ENCODE measurements at regions of chr15 and their contacts with region 1.

Region 1: GRCh38 chr15:95375281-95375680 is 955.2 kb upstream of the NR2F2 start:
- DNase-seq: no peak
- ATAC-seq: no peak
- H3K4me3 ChIP-seq: no peak overlapping the region
- H3K27ac ChIP-seq: no peak overlapping the region
- H3K4me1 ChIP-seq: no peaks in the 10 kb centered on the region
- H3K27me3 ChIP-seq: no peaks in the 10 kb centered on the region
- CTCF ChIP-seq: no peak
- POLR2A ChIP-seq: no peak

Region 2: GRCh38 chr15:95323804-95324203 is 51.5 kb before region 1 on chr15:
- intact Hi-C with region 1: no loop called
- DNase-seq: peak in 1 of 5 donors; percentile 26
- ATAC-seq: no peak
- H3K4me3 ChIP-seq: peak overlapping the region in 2 of 12 donors; percentile 66 to 69
- H3K27ac ChIP-seq: peak overlapping the region in 9 of 12 donors; percentile 9 to 93 (median 74)
- H3K4me1 ChIP-seq: peaks cover 0 to 16% (median 0%) of the 10 kb centered on the region in 12 donors
- H3K27me3 ChIP-seq: peaks cover 0 to 14% (median 5%) of the 10 kb centered on the region in 9 donors
- CTCF ChIP-seq: no peak
- POLR2A ChIP-seq: no peak

Region 3: GRCh38 chr15:95417761-95418160 is 42.5 kb after region 1 on chr15:
- intact Hi-C with region 1: no loop called
- DNase-seq: no peak
- ATAC-seq: no peak
- H3K4me3 ChIP-seq: no peak overlapping the region
- H3K27ac ChIP-seq: peak overlapping the region in 5 of 12 donors; percentile 28 to 51 (median 44)
- H3K4me1 ChIP-seq: peaks cover 0 to 7% (median 0%) of the 10 kb centered on the region in 12 donors
- H3K27me3 ChIP-seq: no peaks in the 10 kb centered on the region
- CTCF ChIP-seq: no peak
- POLR2A ChIP-seq: no peak

Region 4: DNA sequence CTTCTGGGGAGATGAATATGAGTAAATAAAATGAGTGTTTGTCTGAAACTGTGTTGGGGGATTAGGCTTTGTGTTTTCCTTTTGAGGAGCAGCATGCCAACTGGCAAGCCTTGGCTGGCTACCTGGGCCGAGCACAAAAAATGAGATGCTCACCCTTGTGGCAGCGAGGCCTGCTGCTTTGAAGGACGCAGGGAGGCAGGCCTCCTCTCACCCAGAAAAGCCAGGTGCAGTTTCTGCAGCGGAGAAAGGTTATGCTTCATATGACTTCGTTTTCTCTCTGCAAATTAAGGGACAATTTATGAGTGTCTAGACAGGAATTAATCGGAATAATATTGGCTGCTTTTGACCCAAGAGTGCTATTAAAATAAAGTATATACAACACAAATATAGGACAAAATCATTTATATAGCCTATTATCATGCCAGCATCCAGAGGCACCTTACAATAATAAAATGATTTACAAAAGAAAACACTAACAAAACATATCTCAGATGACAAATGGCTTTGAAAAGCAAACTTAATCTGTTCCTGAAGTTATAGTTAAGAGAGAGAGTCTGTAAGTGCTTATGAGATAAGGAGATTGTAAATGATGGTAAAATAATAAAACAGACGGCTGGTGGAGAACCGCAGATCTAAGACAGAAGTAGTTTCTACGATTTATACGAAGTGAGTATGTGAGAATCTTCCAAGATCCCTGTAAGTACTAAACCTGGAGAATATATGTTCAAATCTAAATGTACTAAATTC is 272.4 kb after region 1 on chr15:
- intact Hi-C with region 1: loop called in 1 of 10 experiments (anchors 5 kb)
- DNase-seq: no peak
- ATAC-seq: no peak
- H3K4me3 ChIP-seq: no peak overlapping the region
- H3K27ac ChIP-seq: no peak overlapping the region
- H3K4me1 ChIP-seq: no peaks in the 10 kb centered on the region
- H3K27me3 ChIP-seq: no peaks in the 10 kb centered on the region
- CTCF ChIP-seq: no peak
- POLR2A ChIP-seq: no peak

Region 5: GRCh38 chr15:95812491-95812890 is 437.2 kb after region 1 on chr15:
- intact Hi-C with region 1: no loop called
- DNase-seq: no peak
- ATAC-seq: no peak
- H3K4me3 ChIP-seq: no peak overlapping the region
- H3K27ac ChIP-seq: no peak overlapping the region
- H3K4me1 ChIP-seq: no peaks in the 10 kb centered on the region
- H3K27me3 ChIP-seq: no peaks in the 10 kb centered on the region
- CTCF ChIP-seq: no peak
- POLR2A ChIP-seq: no peak